ENCODE measurements at regions of chr3 and their contacts with region 1.

Region 1: GRCh38 chr3:57597122-57597923 is at the start of gene ARF4:
- DNase-seq: peak; percentile 94
- ATAC-seq: peak; percentile 96
- H3K4me3 ChIP-seq: peak within 1 kb of the TSS; percentile 94 to 96
- H3K27ac ChIP-seq: peak within 1 kb of the TSS; percentile 97
- H3K4me1 ChIP-seq: peaks cover 11% of the 10 kb centered on the region
- H3K27me3 ChIP-seq: no peaks in the 10 kb centered on the region
- CTCF ChIP-seq: no peak
- total RNA-seq, gene ARF4: 126 TPM

Region 2: GRCh38 chr3:57108684-57109083 is 488.6 kb before region 1 on chr3:
- CTCF ChIA-PET with region 1: interaction called, 15 read pairs
- POLR2A ChIA-PET with region 1: no interaction called
- in situ Hi-C with region 1: no loop called
- intact Hi-C with region 1: no loop called
- DNase-seq: no peak
- ATAC-seq: no peak
- H3K4me3 ChIP-seq: no peak overlapping the region
- H3K27ac ChIP-seq: no peak overlapping the region
- H3K4me1 ChIP-seq: peaks cover 8% of the 10 kb centered on the region; the same call in 1 of the 2 replicates
- H3K27me3 ChIP-seq: no peaks in the 10 kb centered on the region
- CTCF ChIP-seq: no peak

Region 3: GRCh38 chr3:57512166-57512565 is 85.2 kb before region 1 on chr3:
- CTCF ChIA-PET with region 1: interaction called, 17 read pairs
- POLR2A ChIA-PET with region 1: no interaction called
- in situ Hi-C with region 1: no loop called
- intact Hi-C with region 1: no loop called
- DNase-seq: no peak
- ATAC-seq: no peak
- H3K4me3 ChIP-seq: no peak overlapping the region
- H3K27ac ChIP-seq: no peak overlapping the region
- H3K4me1 ChIP-seq: no peaks in the 10 kb centered on the region
- H3K27me3 ChIP-seq: no peaks in the 10 kb centered on the region
- CTCF ChIP-seq: no peak